Colonic mucosa (tissue), 4 donors: ENCODE measurements at regions of chr6 and their contacts with region 1.

Region 1: DNA sequence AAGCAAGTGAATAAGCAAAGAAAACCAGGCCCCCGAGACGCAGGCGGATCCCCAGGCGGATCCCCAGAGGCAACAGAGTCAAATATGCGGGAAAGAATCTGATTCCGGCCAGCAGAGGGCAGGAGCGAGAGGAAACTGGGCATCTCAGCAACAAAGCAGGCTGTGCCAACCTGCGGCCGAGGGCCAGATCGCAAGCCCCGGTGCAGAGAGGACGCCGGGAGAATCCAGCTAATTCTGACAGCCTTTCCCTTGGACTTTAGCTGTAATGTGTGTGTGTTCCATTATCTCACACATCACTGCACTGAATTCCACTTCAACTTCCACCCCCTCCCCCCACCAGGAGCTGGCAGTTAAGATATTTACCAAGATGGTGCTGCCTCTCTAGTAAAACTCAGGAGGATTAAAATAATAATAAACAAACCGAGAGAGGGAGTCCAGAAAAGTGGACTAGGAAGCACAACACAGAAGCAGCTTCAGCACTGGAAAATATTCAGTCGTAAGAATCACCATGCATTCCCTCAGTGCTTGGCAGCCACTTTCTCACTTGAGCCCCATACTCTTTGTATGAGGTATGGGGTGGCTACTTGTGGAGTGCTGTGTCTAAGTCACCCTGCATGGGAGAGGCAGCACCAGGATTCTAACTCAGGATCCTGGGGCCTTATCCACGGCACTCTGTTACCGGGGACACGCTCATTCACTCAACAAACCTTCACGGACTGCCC is 66.2 kb upstream of the SNX9 start:
- DNase-seq: peak; percentile 94
- H3K4me3 ChIP-seq: no peak overlapping the region
- H3K27ac ChIP-seq: no peak overlapping the region
- H3K4me1 ChIP-seq: peaks cover under 1% of the 10 kb centered on the region
- H3K27me3 ChIP-seq: no peaks in the 10 kb centered on the region
- CTCF ChIP-seq: peak; percentile 72

Region 2: GRCh38 chr6:157579467-157580031 is 177.3 kb before region 1 on chr6:
- intact Hi-C with region 1: no loop called
- DNase-seq: peak; percentile 25
- H3K4me3 ChIP-seq: no peak overlapping the region
- H3K27ac ChIP-seq: peak overlapping the region; percentile 29
- H3K4me1 ChIP-seq: no peaks in the 10 kb centered on the region
- H3K27me3 ChIP-seq: no peaks in the 10 kb centered on the region
- CTCF ChIP-seq: no peak

Region 3: DNA sequence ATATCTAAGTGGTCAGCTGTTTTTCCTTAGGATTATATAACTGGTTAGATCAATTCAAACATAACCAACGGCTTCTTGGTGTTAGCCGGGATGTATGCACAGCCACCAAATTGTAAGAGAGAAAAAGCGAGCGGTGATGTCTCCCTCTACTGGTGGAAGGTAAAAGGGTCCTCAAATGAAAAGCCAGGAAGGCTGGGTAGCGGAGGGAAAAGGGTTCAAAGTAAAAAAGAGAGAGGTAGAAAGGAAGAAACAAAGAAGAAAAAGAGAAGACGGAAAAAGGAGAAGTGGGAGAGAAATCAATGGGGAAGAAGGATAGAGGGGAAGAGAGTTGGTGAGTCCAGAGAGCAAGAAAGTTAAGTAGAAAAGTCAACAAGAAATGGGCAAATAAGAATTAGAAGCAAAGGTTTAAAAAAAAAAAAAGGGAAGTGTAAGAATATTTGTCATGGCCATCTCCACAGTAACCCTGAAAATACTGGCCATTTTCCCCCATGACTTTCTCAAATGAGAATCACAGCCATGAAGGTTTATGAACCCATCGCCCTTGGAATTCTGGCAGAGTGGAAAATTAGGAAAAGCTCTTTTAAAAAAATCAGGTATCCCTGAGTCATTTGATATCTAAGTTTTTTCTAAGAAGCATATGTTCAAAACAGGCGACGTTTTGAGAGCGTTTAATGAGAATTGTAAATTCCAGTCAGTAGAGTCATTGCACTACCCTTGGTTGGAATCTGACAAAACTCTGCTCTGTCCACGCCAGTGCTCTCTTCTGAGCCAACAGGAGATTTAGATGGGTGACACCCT is 89.5 kb before region 1 on chr6:
- intact Hi-C with region 1: loop called (anchors 2 kb)
- DNase-seq: peak; percentile 70
- H3K4me3 ChIP-seq: no peak overlapping the region
- H3K27ac ChIP-seq: no peak overlapping the region
- H3K4me1 ChIP-seq: peaks cover 6% of the 10 kb centered on the region
- H3K27me3 ChIP-seq: no peaks in the 10 kb centered on the region
- CTCF ChIP-seq: peak; percentile 74

Region 4: GRCh38 chr6:157873735-157874344 is 117.0 kb after region 1 on chr6:
- intact Hi-C with region 1: loop called (anchors 2 kb)
- DNase-seq: peak; percentile 88
- H3K4me3 ChIP-seq: no peak overlapping the region
- H3K27ac ChIP-seq: no peak overlapping the region
- H3K4me1 ChIP-seq: no peaks in the 10 kb centered on the region
- H3K27me3 ChIP-seq: no peaks in the 10 kb centered on the region
- CTCF ChIP-seq: peak; percentile 87

Region 5: DNA sequence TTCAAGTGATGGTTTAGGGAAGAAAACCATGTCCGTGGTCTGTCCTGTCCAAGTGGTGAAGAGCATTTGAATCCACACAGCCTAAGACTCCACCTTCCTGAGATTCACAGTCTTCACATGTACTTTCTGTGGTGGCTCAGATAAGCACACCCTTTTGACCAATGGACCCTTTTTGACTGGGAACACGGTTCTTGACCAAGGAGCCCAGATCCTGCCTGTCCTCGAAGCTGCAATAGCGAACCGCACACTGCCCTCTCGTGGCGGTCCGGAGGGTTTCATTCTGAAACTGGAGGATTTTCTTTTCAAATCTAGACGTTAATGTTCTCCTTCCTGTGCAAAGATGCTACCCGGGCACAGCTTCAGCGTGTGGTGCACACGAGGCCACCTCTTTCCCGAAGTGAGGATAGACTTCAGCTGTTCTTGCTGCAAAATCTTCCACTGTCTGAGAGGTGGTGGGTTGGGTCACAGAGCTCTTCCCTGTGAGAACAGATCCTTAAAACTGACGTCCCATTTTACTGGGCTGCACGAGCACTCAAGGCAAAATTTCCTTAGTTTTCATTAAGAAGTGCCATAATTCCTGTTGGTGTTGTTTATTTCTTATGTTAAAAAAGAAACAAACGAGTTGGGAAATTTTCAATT is 315.3 kb after region 1 on chr6:
- intact Hi-C with region 1: loop called (anchors 10 kb)
- DNase-seq: peak; percentile 72
- H3K4me3 ChIP-seq: no peak overlapping the region
- H3K27ac ChIP-seq: no peak overlapping the region
- H3K4me1 ChIP-seq: peaks cover 4% of the 10 kb centered on the region
- H3K27me3 ChIP-seq: no peaks in the 10 kb centered on the region
- CTCF ChIP-seq: peak; percentile 73